ENCODE measurements at regions of chr9 and their contacts with region 1.

Region 1: DNA sequence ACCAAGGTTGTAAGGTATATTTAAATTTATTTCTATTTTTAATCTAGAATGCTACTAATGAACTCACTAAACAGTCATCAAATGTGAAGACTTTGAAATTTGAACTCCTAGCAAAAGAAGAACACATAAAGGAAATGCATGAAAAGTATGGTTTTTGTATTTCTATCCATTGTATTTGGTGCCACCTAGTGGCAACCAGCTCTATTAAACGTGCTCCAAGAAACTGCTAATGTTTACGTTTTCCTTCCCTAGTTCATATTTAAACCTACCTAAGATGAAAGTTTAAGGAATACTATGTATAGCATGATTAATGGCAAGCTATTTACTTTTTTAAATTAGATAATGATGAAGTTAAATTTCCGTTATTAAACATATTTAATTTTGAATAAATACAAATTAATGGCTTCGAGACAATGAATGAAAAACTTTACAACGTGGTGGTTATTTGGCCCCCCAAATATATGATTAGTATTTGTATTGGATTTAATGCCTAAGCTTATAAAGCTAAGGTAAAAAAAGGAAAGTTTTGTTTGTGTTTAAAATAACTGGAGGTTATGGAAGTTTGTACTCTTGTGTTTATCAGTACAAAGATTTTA is 115.9 kb upstream of the SH3GL2 start:
- DNase-seq: no peak

Region 2: DNA sequence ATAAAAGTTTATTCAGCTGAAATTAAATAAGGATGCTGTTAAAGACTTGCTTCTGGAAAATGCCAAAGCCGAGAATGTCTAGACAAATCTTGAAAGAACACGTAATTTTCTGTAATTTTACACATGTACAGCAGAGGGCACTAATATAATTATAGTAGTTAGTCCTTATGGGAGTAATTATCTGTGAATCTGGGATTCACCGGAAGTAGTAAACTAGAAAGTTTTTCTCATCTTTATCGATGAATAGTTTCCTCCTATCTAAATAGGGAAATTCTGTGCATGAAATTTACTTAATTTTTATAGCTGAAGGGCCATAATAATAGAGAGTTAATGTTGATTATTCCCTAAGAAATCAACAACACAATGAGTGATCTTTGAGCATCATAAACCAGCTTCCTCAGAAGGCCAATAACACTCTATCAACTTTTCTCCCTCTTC is 346.5 kb before region 1 on chr9:
- intact Hi-C with region 1: loop called (anchors 5 to 10 kb)
- DNase-seq: no peak

Region 3: DNA sequence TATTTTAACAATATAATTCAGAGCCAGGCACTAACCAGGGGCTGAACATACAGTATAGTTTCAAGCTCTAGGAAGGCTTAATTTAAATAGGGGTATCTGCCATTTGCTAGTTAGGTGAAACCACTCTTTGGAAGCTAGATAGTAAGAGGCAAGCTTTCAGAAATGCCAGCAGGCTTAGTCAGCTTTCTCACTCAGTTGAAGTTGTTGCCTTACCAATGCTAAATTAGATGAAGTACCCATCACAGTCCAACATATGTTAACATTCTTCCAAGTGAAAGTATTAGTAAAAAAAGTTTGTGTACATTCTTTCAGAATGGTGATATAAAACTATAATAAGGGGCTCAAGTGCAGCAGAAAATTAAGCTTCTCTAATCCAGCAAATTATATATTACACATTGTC is 113.1 kb before region 1 on chr9:
- intact Hi-C with region 1: no loop called
- DNase-seq: no peak

Region 4: DNA sequence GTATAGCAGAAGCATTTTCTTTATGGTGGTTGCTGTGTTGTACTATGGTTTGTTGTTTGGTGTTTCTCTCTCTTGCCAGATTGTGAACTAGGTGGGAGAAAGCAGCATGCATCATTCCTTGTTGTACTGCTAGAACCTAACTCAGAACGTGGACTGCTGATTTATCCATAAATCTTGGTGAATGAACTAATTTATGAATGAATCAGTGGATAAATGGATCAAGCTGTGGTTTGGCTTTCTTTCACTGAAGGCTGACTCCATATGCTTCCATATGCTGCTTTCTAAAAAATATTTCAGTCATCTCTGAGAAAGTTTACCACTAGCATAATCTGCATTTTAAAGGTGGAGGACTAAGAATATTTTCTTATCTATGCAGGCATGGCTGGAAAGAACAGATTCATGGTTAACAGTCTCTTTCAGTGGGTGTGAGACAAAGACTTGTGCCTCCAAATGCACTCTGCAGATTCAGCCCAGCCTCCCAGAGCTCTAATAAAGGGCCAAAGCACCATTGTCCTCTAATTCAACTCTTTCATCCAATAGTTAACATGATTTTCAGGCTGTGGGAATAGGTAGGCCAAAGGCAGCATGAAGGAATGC is 353.6 kb after region 1 on chr9:
- intact Hi-C with region 1: no loop called
- DNase-seq: no peak

Measured in posterior vena cava (tissue), 2 donors.